ENCODE measurements at regions of chr14 and their contacts with region 1.

Region 1: GRCh38 chr14:101774006-101774795 is 12.7 kb downstream of the PPP2R5C start:
- DNase-seq: no peak
- CTCF ChIP-seq: no peak

Region 2: DNA sequence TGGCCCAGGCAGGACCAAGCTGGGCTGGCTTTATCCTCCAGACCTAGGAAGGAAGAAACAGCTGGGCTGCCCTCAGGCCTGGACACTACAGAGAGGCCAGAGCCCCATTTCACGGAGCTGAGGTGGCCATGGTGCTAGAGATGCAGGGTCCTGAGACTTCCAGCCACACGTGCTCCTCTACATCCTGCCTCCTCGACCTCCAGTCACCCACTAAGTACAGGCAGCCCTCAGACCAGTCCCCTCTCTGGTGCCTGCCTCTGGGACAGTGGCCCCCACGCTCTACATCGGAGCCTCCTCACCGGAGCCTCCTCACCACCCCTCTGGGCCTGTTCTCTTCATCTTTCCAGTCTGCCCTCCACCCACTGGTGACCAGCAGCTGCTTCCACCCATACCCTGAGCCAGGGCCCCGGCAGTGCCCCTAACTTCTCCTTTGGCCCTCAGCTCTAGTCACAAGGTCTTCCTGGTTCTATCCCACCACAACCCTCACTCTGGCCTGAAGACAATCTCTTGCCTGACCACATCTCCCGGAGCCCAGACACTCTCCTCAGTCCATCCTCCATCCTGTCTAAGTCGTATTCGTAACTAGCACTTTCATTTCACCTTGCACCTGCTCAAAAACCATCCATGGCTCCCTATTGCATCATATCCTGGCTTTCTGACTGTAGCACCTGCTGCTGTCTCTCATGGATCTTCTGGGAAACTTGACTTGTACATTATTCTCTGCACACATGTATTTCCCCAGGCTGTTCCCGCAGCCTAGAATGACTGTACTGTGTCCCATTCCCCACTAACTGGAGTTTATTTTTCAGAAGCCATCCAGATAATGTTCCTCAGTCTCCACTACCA is 169.0 kb before region 1 on chr14:
- in situ Hi-C with region 1: no loop called
- DNase-seq: no peak
- CTCF ChIP-seq: no peak

Region 3: GRCh38 chr14:101823511-101824120 is 49.4 kb after region 1 on chr14:
- in situ Hi-C with region 1: loop called (anchors 10 kb)
- DNase-seq: no peak
- CTCF ChIP-seq: no peak

Region 4: DNA sequence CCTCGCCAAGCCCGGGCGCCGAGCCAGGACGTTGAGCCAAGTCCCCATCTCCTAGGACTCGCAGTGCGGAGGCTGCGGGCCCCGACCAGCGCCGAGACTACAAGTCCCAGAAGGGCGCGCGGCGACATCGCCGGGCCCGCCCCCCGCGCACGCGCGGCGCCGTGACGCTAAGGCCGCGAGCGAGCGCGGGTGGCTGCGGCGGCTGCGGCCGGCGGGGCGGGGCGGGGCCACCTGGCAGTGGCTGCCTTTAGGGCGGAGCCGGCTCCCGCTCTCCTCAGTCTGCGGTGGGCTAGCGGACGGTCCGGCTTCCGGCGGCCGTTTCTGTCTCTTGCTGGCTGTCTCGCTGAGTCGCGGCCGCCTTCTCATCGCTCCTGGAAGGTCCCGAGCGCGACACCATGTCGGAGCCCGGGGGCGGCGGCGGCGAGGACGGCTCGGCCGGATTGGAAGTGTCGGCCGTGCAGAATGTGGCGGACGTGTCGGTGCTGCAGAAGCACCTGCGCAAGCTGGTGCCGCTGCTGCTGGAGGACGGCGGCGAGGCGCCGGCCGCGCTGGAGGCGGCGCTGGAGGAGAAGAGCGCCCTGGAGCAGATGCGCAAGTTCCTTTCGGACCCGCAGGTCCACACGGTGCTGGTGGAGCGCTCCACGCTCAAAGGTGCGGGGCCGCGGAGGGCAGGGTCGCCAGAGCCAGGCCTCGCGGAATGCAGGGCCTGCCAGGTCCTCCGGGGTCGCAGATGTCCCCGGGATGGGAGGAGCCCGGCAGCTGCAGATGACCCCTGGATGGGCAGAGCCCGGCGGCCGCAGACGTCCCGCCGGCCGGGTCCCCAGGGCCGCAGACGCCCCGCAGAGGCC is 190.3 kb after region 1 on chr14 and contains the start of gene DYNC1H1:
- in situ Hi-C with region 1: loop called (anchors 10 kb)
- DNase-seq: peak; percentile 95
- CTCF ChIP-seq: no peak